Common myeloid progenitor, CD34-positive (primary cell): ENCODE measurements at regions of chr18 and their contacts with region 1.

Region 1: DNA sequence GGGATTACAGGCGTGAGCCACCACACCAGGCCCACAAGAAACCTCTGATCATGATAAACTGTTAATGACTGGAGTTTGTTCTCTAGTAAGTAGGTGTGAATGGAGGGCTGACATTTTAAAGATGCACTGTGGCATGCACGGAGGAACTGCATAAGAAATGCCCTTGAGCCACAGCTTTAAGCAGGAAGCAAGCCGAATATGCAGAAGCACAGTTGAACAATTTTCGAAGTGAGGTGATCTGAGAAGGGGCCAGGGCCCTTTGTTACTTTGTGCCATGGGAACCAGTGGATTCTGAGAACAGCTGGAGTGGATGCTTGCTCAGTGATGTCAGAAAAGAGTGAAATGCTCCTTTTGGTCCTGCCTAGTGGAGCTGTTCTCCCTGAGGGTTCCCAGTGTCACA is 16.3 kb downstream of the FECH start:
- DNase-seq: no peak
- H3K4me3 ChIP-seq: no peak overlapping the region
- H3K27ac ChIP-seq: no peak overlapping the region
- H3K4me1 ChIP-seq: peaks cover 0 to 3% (median 0%) of the 10 kb centered on the region in 4 experiments
- H3K27me3 ChIP-seq: no peaks in the 10 kb centered on the region

Region 2: DNA sequence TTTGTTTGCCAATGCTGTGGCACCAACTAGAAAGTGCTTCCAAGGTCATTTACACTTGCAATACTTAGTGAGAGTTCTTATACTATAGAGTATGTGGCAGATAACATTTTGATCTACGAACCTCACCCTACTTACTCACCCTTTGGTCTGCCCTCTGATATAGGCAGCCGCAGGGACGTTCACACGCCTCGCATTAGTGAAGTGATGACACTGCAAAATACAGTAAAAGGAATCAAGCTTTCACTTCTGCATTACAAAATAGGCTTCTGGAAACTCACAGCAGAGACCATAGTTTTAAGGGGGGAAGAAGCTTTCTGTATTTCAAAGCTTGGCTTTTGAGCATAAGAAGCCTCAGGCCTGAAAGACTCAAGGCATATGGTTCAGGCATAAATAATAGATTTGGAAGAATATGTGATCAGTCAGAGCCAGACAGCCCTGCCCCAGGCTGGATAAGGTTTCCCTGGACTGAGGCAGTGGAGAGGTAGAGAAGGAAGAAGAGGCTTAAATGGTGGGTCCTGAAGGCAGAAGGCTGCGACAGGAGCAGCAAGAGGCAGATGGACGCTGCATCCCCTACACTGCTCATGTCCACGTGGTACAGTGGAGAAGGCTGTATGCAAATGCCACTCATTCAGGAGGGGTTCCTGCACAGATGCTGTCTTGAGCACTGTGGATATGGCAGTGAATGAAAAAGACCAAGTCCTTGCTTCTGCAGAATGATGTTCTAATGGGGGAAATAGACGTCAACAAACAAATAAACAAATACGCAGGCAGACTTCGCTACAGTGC is 46.8 kb before region 1 on chr18:
- CTCF ChIA-PET with region 1: no interaction called
- POLR2A ChIA-PET with region 1: no interaction called
- DNase-seq: peak; percentile 31 to 74 (median 68)
- H3K4me3 ChIP-seq: no peak overlapping the region
- H3K27ac ChIP-seq: no peak overlapping the region
- H3K4me1 ChIP-seq: peaks cover 0 to 10% (median 1%) of the 10 kb centered on the region in 4 experiments
- H3K27me3 ChIP-seq: no peaks in the 10 kb centered on the region

Region 3: DNA sequence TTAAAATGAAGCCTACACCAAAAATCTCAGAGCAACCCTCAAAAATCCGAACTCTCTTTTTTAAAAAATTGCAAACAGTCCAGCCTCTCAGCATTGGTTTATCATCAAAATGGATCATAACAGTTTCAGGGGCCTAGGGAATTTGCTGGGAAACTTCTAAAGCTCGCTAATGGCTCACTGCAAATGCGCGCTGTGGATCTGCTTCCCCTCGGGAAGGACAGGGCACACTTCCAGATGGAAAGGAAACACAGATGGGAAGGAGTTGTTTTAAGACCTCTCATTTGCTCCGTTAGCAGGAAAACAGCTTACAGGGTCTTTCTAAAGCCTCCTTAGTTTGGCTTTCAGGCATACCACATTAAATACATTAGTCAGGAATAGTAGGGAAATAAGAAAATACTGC is 10.8 kb before region 1 on chr18:
- CTCF ChIA-PET with region 1: interaction called, 12 read pairs
- POLR2A ChIA-PET with region 1: no interaction called
- DNase-seq: no peak
- H3K4me3 ChIP-seq: no peak overlapping the region
- H3K27ac ChIP-seq: no peak overlapping the region
- H3K4me1 ChIP-seq: no peaks in the 10 kb centered on the region
- H3K27me3 ChIP-seq: no peaks in the 10 kb centered on the region

Region 4: DNA sequence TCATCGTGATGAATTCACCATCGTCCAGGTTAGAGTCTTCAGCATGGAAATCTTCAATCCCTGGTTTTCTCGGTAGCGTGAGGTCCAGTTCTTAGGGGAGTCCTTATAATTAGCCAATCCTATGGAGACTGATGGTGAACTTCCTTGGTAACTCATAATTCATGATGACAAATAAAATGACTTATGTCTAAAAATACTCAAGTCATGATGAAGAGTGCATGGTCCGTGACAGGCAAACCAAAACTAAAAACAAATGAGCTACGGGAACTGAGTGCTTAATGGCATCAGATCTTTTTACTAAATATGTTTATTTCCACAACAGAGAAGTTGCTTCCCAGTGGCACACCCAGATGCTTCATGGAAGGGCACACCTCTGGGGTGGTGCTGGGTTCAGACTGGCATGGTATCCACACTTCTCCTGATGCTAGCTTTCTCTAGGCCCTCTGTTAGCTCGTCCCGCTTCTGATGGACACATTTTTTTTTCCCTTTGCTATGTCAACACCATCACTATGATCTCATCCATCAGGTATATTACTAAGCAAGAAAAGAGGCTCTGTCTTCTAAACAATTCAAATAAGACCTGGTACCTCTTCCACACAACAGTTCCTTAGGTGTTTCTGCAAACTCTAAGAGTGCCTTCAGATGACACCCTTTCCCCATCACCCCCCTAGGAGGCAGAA is 381.1 kb after region 1 on chr18:
- CTCF ChIA-PET with region 1: no interaction called
- POLR2A ChIA-PET with region 1: no interaction called
- DNase-seq: no peak
- H3K4me3 ChIP-seq: no peak overlapping the region
- H3K27ac ChIP-seq: no peak overlapping the region
- H3K4me1 ChIP-seq: no peaks in the 10 kb centered on the region
- H3K27me3 ChIP-seq: peaks cover 0 to 3% (median 0%) of the 10 kb centered on the region in 5 experiments

Region 5: GRCh38 chr18:58101291-58101794 is 531.2 kb after region 1 on chr18:
- CTCF ChIA-PET with region 1: no interaction called
- POLR2A ChIA-PET with region 1: no interaction called
- DNase-seq: no peak
- H3K4me3 ChIP-seq: no peak overlapping the region
- H3K27ac ChIP-seq: no peak overlapping the region
- H3K4me1 ChIP-seq: peaks cover 0 to 16% (median 14%) of the 10 kb centered on the region in 4 experiments
- H3K27me3 ChIP-seq: peaks cover 0 to 4% (median 2%) of the 10 kb centered on the region in 5 experiments